Colonic mucosa (tissue), 4 donors: ENCODE measurements at regions of chr12 and their contacts with region 1.

Region 1: DNA sequence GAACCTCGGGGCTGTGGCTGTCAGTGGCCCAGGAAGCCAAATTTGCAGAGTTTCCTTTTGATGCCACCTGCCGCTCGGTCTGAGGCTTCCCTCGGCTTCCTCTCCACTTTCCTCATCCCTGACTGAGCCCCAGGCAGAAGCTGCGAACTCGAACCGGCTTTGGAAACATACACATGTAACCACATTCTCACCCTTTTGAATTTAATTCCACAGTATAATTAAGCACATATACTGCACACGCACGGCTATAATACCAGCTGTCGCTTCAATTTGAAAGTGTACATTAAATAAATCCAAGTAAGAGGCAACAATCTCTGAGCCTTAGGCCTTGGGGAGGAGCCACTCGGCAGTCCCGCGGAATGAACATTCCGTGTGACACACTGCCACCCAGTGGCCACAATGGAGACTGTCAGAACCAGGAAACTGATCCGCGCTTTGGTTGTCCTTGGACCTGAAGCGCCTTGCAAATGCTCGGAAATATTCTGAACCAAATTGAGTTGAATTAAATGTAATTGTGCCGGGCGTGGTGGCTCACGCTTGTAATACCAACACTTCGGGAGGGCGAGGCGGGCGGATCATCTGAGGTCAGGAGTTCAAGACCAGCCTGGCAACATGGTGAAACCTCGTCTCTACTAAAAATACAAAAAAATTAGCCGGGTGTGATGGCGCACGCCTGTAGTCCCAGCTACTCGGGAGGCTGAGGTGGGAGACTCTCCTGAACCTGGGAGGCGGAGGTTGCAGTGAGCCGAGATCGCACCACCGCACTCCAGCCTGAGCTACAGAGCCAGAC is 117.9 kb upstream of the TMPO start:
- DNase-seq: peak; percentile 89
- H3K4me3 ChIP-seq: peak overlapping the region; percentile 30
- H3K27ac ChIP-seq: no peak overlapping the region
- H3K4me1 ChIP-seq: no peaks in the 10 kb centered on the region
- H3K27me3 ChIP-seq: no peaks in the 10 kb centered on the region
- CTCF ChIP-seq: peak; percentile 96

Region 2: GRCh38 chr12:97159362-97159761 is 1238.1 kb before region 1 on chr12:
- intact Hi-C with region 1: loop called (anchors 10 kb)
- DNase-seq: no peak
- H3K4me3 ChIP-seq: no peak overlapping the region
- H3K27ac ChIP-seq: no peak overlapping the region
- H3K4me1 ChIP-seq: no peaks in the 10 kb centered on the region
- H3K27me3 ChIP-seq: no peaks in the 10 kb centered on the region
- CTCF ChIP-seq: no peak

Region 3: DNA sequence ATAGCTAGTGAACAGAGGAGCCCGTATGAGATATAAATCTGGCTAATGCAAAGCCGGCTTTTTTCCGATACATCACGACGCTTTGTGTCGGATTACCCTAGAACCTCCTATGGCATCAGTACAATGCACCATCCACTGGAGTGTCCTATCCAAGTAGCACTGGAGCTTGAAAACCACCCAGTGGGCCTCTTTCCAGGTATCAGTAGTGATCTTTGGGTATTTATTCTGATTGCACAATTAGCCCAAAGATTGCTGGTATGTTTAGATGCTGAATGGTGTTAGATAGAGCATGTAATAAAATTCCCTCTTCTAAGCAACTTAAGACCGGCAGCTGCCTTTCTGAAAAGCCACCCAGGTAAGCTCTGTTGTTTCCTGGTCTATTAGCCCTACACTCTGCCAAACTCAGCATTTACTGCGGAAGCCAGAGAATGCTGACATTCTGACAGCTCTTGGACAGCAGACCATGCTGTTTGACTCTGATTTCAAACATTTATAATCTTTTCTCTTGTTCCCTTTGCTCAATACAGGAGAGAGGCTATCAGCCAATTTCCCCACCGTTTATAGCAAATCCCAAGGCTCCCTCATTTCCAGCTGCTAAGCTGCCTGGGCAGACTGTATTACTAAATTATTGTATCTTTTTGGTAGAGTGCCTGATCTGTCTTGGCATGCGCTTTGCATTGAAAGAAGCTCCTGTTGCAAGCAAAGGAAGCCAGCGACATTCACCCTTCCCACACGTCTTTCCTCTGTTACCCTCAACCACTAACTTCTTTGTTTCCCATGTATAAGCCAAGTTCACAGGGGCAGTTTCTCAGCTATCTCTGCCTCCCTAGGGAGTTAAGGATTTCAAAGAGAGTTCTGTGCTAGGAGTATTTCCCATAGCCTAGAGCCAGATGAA is 861.8 kb after region 1 on chr12:
- intact Hi-C with region 1: no loop called
- DNase-seq: no peak
- H3K4me3 ChIP-seq: no peak overlapping the region
- H3K27ac ChIP-seq: no peak overlapping the region
- H3K4me1 ChIP-seq: no peaks in the 10 kb centered on the region
- H3K27me3 ChIP-seq: no peaks in the 10 kb centered on the region
- CTCF ChIP-seq: no peak